ENCODE measurements at regions of chr13 and their contacts with region 1.

Region 1: GRCh38 chr13:52128714-52129700 is at the start of gene NEK5:
- DNase-seq: peak; percentile 56
- H3K4me3 Mint-ChIP-seq: peak within 1 kb of the TSS; percentile 78
- H3K27ac Mint-ChIP-seq: no peak within 1 kb of the TSS
- H3K4me1 Mint-ChIP-seq: peaks cover 5% of the 10 kb centered on the region
- H3K27me3 Mint-ChIP-seq: no peaks in the 10 kb centered on the region
- CTCF ChIP-seq: peak; percentile 79
- total RNA-seq, gene NEK5: 0.21 and 0.61 TPM in 2 replicates

Region 2: DNA sequence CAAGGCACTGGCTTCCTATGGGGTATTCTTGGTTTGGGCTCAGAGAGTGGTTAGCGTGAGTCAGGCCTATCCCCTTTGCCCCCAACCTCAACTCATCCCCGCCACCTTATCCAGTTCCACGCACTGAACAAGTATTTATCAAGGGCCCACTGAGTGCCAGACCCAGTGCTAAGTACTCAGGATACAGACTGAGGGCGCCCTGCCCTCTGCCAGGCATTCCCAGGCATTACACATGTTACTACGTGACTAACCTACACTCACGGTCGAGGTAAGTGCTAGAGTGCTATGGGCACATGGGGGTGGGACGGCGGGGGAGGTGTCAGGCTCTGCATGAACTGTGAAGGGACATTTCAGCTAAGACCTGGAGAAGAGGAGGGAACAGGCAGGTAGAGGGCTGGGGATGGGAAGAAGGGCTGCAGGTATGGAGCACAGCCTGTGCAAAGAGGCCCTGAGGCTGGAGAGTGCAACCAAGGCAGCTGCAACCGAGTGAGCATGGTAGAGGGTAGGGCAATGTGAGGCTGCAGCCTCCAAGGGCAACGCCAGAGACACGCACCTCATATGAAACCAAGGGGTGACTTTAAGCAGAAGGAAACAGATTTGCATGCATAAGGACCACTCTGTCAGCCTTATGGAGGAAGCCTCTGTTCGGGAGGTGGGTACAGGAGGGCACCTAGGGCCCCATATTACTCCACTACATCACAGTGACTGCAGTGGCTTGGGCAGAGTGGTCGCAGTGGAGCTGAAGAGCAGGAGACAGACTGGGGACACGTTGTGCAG is 347.6 kb before region 1 on chr13:
- CTCF ChIA-PET with region 1: no interaction called
- POLR2A ChIA-PET with region 1: no interaction called
- intact Hi-C with region 1: no loop called
- DNase-seq: peak; percentile 70
- H3K4me3 Mint-ChIP-seq: no peak overlapping the region
- H3K27ac Mint-ChIP-seq: peak overlapping the region; percentile 33
- H3K4me1 Mint-ChIP-seq: peaks cover 11% of the 10 kb centered on the region
- H3K27me3 Mint-ChIP-seq: no peaks in the 10 kb centered on the region
- CTCF ChIP-seq: peak; percentile 43

Region 3: GRCh38 chr13:51895906-51896888 is 232.8 kb before region 1 on chr13:
- CTCF ChIA-PET with region 1: interaction called, 126 read pairs
- POLR2A ChIA-PET with region 1: interaction called, 8 read pairs
- intact Hi-C with region 1: loop called (anchors 1 kb)
- DNase-seq: peak; percentile 58
- H3K4me3 Mint-ChIP-seq: no peak overlapping the region
- H3K27ac Mint-ChIP-seq: no peak overlapping the region
- H3K4me1 Mint-ChIP-seq: no peaks in the 10 kb centered on the region
- H3K27me3 Mint-ChIP-seq: peaks cover 23% of the 10 kb centered on the region
- CTCF ChIP-seq: peak; percentile 68

Region 4: DNA sequence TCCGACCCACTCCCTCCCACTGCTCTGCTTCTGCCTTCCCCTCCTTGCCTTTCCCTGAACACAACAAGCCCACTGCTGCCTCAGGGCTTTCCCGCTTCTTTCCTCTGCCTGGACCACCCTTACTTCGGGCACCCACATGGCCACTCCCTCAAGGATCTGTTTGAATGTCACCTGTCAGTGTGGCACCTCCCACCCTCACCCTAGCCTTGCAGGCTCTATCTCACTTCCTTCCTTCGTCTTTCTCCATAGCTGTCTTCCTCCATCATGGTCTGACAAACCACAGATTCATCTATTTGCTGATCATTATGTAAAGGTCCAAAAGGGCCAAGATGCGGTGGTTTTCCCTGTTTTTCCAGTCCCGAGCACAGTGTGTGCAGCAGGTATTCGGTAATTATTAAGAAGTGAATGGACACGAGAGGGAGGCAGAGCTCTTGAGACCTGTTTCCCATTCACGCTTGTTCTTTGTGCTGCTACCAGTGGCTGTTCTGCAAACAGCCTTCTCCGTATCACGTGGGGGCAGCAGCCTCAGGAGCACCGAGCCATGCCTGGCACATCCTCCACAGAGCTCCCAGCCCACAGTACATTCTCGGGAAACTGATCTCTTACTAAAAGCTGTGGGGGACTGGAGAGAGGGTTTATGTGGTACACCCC is 217.0 kb before region 1 on chr13:
- CTCF ChIA-PET with region 1: interaction called, 12 read pairs
- POLR2A ChIA-PET with region 1: interaction called, 3 read pairs
- intact Hi-C with region 1: no loop called
- DNase-seq: no peak
- H3K4me3 Mint-ChIP-seq: no peak overlapping the region
- H3K27ac Mint-ChIP-seq: no peak overlapping the region
- H3K4me1 Mint-ChIP-seq: peaks cover 12% of the 10 kb centered on the region
- H3K27me3 Mint-ChIP-seq: peaks cover 42% of the 10 kb centered on the region
- CTCF ChIP-seq: no peak

Region 5: DNA sequence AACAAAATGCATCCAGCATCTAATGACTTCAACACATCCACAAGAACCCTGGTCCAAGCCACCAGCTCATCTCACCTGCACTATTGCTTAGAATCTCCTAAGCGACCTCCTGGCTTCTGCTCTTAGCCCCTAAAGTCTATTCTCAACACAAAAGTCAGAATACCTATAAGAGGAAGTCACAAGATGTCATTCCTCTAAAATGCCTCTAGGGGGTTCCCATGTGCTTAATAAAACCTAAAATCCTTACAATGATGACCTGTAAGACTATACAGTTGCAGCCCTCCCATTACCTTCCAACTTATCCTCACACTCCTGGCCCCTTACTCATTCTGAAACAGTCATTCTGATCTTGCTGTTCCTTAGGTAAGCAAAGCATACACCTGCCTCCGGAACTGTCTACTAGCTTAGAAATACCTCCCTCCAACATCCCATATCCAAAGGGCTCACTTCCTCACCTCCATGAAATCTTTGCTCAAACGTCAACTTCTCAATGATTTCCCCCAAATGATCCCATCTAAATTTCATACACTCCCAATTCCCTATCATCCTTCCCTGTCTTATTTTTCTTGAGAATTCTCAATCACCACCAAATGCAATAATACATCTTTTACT is 127.8 kb before region 1 on chr13:
- CTCF ChIA-PET with region 1: interaction called, 97 read pairs
- POLR2A ChIA-PET with region 1: interaction called, 6 read pairs
- intact Hi-C with region 1: loop called (anchors 1 kb)
- DNase-seq: peak; percentile 51
- H3K4me3 Mint-ChIP-seq: no peak overlapping the region
- H3K27ac Mint-ChIP-seq: no peak overlapping the region
- H3K4me1 Mint-ChIP-seq: peaks cover 27% of the 10 kb centered on the region
- H3K27me3 Mint-ChIP-seq: peaks cover 12% of the 10 kb centered on the region
- CTCF ChIP-seq: peak; percentile 60

Region 6: GRCh38 chr13:52070929-52071523 is 58.0 kb before region 1 on chr13:
- CTCF ChIA-PET with region 1: interaction called, 7 read pairs
- POLR2A ChIA-PET with region 1: no interaction called
- intact Hi-C with region 1: loop called (anchors 1 kb)
- DNase-seq: peak; percentile 18
- H3K4me3 Mint-ChIP-seq: no peak overlapping the region
- H3K27ac Mint-ChIP-seq: no peak overlapping the region
- H3K4me1 Mint-ChIP-seq: peaks cover 15% of the 10 kb centered on the region
- H3K27me3 Mint-ChIP-seq: no peaks in the 10 kb centered on the region
- CTCF ChIP-seq: no peak

Region 7: DNA sequence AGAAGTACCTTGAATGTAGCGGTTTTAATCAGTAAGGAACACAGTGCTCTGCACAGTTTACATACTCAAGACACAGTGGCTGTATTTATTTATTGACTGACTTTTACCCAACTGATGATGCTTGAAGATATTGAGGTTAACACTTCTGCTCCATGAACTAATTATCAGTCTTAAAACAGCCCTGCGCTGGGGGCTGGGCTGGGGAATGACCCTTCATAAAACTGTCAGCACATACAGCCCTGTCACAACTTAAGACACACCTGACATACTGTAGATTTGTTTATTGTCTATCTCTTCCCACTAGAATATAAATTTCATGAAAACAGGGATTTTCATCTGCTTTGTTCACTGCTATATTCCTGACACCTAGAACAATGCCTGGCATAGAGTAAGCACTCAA is 10.9 kb before region 1 on chr13:
- CTCF ChIA-PET with region 1: interaction called, 13 read pairs
- POLR2A ChIA-PET with region 1: interaction called, 7 read pairs
- intact Hi-C with region 1: no loop called
- DNase-seq: no peak
- H3K4me3 Mint-ChIP-seq: no peak overlapping the region
- H3K27ac Mint-ChIP-seq: no peak overlapping the region
- H3K4me1 Mint-ChIP-seq: no peaks in the 10 kb centered on the region
- H3K27me3 Mint-ChIP-seq: peaks cover 14% of the 10 kb centered on the region
- CTCF ChIP-seq: no peak

Region 8: GRCh38 chr13:52194184-52194868 is 65.3 kb after region 1 on chr13:
- CTCF ChIA-PET with region 1: interaction called, 3 read pairs
- POLR2A ChIA-PET with region 1: interaction called, 4 read pairs
- intact Hi-C with region 1: loop called (anchors 10 kb)
- DNase-seq: peak; percentile 85
- H3K4me3 Mint-ChIP-seq: peak overlapping the region; percentile 96
- H3K27ac Mint-ChIP-seq: peak overlapping the region; percentile 91
- H3K4me1 Mint-ChIP-seq: peaks cover 6% of the 10 kb centered on the region
- H3K27me3 Mint-ChIP-seq: no peaks in the 10 kb centered on the region
- CTCF ChIP-seq: no peak